Caco-2 (cell line): ENCODE measurements at regions of chr7 and their contacts with region 1.

Region 1: DNA sequence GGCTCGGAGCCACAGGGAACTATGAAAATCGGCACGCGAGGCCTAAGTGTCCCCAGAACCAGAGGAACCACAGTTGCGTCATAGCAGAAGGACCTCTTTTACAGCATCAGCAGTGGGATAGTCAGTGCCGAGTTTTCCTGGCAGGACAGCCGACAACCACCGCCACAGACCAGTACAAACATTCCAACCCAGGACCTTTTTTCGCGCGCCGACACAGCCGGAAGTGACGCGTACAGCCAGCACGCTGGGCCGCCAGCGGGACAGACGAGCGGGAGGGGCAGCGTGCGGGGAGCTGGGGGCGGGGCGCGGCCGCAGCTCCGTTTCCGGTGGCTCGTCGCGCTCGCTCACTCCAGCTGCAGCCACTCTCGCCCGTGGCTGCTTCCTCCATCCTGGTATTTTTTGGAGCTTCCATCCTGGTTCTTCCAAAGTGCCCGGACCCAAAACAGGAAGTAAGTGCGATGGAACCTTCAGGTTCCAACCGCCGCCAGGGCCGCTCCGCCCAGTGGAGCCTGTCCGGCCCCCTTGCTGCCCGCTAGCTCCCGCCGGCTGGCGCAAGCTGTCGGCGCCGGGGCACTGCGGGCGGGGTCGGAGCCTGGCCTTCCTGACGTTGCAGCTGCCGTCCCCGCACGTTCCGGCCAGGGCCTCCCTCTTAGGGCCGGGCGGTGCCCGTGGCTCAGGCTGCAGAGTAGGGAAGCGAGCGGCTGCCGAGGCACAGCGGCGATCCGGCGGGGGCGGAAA is at the start of gene DMTF1:
- DNase-seq: peak; percentile 94 to 95
- H3K4me3 ChIP-seq: peak within 1 kb of the TSS; percentile 74
- H3K4me3 Mint-ChIP-seq: peak within 1 kb of the TSS; percentile 99
- H3K27ac Mint-ChIP-seq: peak within 1 kb of the TSS; percentile 99
- H3K4me1 ChIP-seq: peaks cover 14% of the 10 kb centered on the region; the same call in 1 of the 2 replicates
- H3K4me1 Mint-ChIP-seq: peaks cover 7% of the 10 kb centered on the region
- H3K27me3 ChIP-seq: no peaks in the 10 kb centered on the region
- H3K27me3 Mint-ChIP-seq: no peaks in the 10 kb centered on the region
- CTCF ChIP-seq: no peak
- total RNA-seq, gene DMTF1: 59.2 and 60.9 TPM in 2 replicates

Region 2: DNA sequence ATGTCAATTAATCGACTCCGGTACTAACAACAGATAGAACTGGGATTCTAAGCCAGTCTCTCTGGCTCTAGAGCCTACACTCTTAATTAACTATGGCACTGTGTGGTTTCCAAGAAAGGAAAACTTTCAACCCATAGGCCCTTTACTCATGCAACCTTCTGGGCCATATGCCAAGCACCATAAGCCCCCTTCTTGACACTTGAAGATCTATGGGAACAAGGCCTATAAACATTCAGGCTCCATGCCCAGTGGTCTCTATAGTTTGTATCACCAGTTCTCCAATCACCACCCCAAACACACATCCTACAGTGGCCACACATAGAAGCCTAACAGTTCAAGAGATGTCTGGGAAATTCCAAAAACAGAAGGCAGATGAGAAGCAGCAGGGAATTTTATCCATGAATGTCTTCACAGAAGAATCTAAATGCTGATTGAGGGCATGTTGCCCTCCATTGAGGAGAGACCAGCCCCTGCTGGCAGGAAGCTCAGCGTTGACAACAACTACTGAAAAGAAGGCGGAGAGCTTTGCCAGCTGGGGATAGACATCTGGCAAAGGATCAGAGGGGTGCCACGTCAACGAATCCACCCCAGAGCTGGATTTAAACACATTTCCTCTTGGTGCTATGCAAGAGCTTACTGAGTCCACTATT is 444.1 kb before region 1 on chr7:
- CTCF ChIA-PET with region 1: no interaction called
- POLR2A ChIA-PET with region 1: no interaction called
- intact Hi-C with region 1: no loop called
- DNase-seq: no peak
- H3K4me3 ChIP-seq: no peak overlapping the region
- H3K4me3 Mint-ChIP-seq: no peak overlapping the region
- H3K27ac Mint-ChIP-seq: no peak overlapping the region
- H3K4me1 ChIP-seq: no peaks in the 10 kb centered on the region
- H3K4me1 Mint-ChIP-seq: no peaks in the 10 kb centered on the region
- H3K27me3 ChIP-seq: no peaks in the 10 kb centered on the region
- H3K27me3 Mint-ChIP-seq: peaks cover 8% of the 10 kb centered on the region
- CTCF ChIP-seq: no peak

Region 3: DNA sequence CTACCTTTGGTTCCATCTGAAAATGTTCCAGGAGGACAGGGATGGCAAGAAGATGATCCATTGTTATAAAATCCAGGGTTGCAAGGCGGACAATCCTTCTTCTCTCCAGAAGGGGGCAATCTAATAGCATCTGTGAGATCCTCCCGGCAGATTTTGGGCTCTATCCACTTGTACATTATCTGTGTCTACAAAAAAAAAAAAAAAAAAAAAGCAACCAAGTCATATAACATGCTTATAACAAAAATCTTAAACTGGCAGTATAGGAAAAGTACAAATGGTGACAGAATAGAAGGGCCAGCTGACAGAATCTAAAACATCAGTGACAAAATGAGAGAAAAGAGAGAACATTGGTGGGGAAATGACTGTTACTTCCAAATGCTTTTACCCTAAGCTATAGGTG is 225.5 kb before region 1 on chr7:
- CTCF ChIA-PET with region 1: interaction called, 7 read pairs
- POLR2A ChIA-PET with region 1: no interaction called
- intact Hi-C with region 1: loop called (anchors 1 kb)
- DNase-seq: peak in 1 of 2 experiments; percentile 43
- H3K4me3 ChIP-seq: no peak overlapping the region
- H3K4me3 Mint-ChIP-seq: no peak overlapping the region
- H3K27ac Mint-ChIP-seq: no peak overlapping the region
- H3K4me1 ChIP-seq: no peaks in the 10 kb centered on the region
- H3K4me1 Mint-ChIP-seq: no peaks in the 10 kb centered on the region
- H3K27me3 ChIP-seq: no peaks in the 10 kb centered on the region
- H3K27me3 Mint-ChIP-seq: peaks cover 16% of the 10 kb centered on the region
- CTCF ChIP-seq: peak; percentile 66 to 73

Region 4: GRCh38 chr7:87059525-87060287 is 92.6 kb before region 1 on chr7 and contains the start of gene ELAPOR2:
- CTCF ChIA-PET with region 1: interaction called, 5 read pairs
- POLR2A ChIA-PET with region 1: interaction called, 6 read pairs
- intact Hi-C with region 1: loop called (anchors 1 kb)
- DNase-seq: peak; percentile 68 to 85
- H3K4me3 ChIP-seq: peak within 1 kb of the TSS; percentile 44
- H3K4me3 Mint-ChIP-seq: peak within 1 kb of the TSS; percentile 68
- H3K27ac Mint-ChIP-seq: no peak within 1 kb of the TSS
- H3K4me1 ChIP-seq: peaks cover 4% of the 10 kb centered on the region
- H3K4me1 Mint-ChIP-seq: no peaks in the 10 kb centered on the region
- H3K27me3 ChIP-seq: no peaks in the 10 kb centered on the region; the same call in 1 of the 2 replicates
- H3K27me3 Mint-ChIP-seq: peaks cover 13% of the 10 kb centered on the region
- CTCF ChIP-seq: peak; percentile 46 to 59
- total RNA-seq, gene ELAPOR2: 4.6 and 5.6 TPM in 2 replicates

Region 5: DNA sequence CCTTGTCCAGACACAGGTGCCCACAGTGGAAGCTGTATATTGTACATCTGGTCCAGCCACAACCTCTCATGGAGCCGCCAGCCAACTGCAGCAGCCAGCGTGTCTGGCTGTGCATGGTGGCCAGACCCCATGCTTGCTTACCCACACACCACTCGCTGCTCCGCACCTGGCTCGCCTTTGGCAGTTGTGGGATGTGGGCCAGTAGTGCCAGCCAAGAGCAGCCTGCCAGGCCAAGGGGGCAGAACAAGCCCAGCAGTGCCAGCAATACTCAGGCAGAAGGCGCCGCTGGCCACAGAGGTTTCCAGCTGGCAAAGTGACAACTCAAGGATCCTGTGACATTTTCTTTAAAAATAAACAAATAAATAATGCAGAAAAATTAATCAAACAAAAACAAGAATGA is 79.0 kb after region 1 on chr7:
- CTCF ChIA-PET with region 1: no interaction called
- POLR2A ChIA-PET with region 1: interaction called, 3 read pairs
- intact Hi-C with region 1: loop called (anchors 2 kb)
- DNase-seq: no peak
- H3K4me3 ChIP-seq: no peak overlapping the region
- H3K4me3 Mint-ChIP-seq: no peak overlapping the region
- H3K27ac Mint-ChIP-seq: no peak overlapping the region
- H3K4me1 ChIP-seq: no peaks in the 10 kb centered on the region
- H3K4me1 Mint-ChIP-seq: peaks cover under 1% of the 10 kb centered on the region
- H3K27me3 ChIP-seq: no peaks in the 10 kb centered on the region; the same call in 1 of the 2 replicates
- H3K27me3 Mint-ChIP-seq: peaks cover 7% of the 10 kb centered on the region
- CTCF ChIP-seq: no peak

Region 6: DNA sequence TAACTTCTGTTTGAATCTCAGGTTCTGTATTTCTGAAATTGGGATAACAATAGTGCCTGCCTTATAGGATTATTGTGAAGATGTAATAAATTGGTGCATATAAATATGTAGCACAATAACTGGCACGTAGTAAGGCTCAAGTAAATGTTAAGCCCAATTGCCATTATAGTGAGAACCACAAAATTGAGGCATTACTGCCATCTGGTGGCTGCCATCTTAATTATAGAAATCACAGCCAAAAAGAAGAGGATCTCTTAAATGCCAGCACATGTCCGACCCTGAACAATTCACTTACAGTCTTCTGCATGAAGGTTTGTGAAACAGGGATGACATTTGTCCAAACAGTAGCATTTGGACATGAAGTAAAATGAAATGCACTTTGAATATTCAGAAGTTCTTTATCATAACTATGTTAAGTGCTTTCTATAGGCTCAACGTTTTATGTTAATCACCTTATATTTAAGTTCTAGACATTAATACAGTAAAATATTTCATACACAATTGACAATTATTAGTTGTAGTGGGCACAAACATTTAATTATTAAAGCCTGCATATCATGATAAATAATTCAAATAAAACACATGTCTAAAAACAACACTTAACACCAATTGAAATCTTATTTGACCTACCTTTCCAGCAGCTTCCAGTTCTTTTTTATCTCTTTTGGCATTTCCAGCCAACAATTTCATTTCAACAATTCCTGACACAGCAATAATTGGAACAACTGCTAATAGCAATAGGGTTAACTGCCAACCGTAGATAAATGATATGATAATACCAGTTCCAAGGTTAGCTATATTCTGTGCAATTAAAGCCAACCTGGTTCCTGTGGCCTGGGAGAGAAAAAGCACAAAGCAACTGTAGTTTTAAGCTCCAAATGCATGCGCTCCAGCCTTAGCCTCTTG is 264.7 kb after region 1 on chr7:
- CTCF ChIA-PET with region 1: no interaction called
- POLR2A ChIA-PET with region 1: no interaction called
- intact Hi-C with region 1: loop called (anchors 5 kb)
- DNase-seq: peak; percentile 51 to 74
- H3K4me3 ChIP-seq: no peak overlapping the region
- H3K4me3 Mint-ChIP-seq: no peak overlapping the region
- H3K27ac Mint-ChIP-seq: no peak overlapping the region
- H3K4me1 ChIP-seq: peaks cover 27% of the 10 kb centered on the region
- H3K4me1 Mint-ChIP-seq: peaks cover 7% of the 10 kb centered on the region
- H3K27me3 ChIP-seq: no peaks in the 10 kb centered on the region
- H3K27me3 Mint-ChIP-seq: peaks cover 4% of the 10 kb centered on the region
- CTCF ChIP-seq: peak; percentile 50 to 64